MCF 10A (cell line): ENCODE measurements at regions of chrX and their contacts with region 1.

Region 1: DNA sequence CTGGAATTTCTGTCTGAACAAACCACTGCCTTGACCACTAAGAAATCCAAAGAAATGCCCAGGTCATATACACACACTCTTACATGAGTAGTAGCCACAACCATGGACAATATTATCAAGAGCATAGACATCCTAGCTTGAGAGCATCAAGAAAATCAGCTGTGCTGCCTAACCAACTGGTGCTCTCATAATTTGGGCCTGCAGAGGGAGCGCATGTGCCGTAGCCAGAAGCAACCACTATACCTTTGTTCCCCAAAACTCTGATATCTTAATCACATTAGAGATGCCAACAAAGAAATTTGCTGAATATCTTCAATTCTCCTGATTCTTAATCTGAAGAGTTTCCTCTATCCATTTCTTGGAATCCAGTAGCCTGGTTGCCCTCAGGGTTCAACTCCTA is 163.6 kb downstream of the ZNF674 start:
- DNase-seq: peak; percentile 40
- H3K4me3 Mint-ChIP-seq: no peak overlapping the region
- H3K27ac Mint-ChIP-seq: no peak overlapping the region
- H3K4me1 Mint-ChIP-seq: no peaks in the 10 kb centered on the region
- H3K27me3 Mint-ChIP-seq: peaks cover 54% of the 10 kb centered on the region
- CTCF ChIP-seq: peak; percentile 53

Region 2: GRCh38 chrX:46642145-46642544 is 260.5 kb after region 1 on chrX:
- CTCF ChIA-PET with region 1: no interaction called
- POLR2A ChIA-PET with region 1: no interaction called
- intact Hi-C with region 1: loop called (anchors 5 kb)
- DNase-seq: peak; percentile 38
- H3K4me3 Mint-ChIP-seq: no peak overlapping the region
- H3K27ac Mint-ChIP-seq: no peak overlapping the region
- H3K4me1 Mint-ChIP-seq: no peaks in the 10 kb centered on the region
- H3K27me3 Mint-ChIP-seq: peaks cover 47% of the 10 kb centered on the region
- CTCF ChIP-seq: peak; percentile 27